ENCODE measurements at regions of chr1 and their contacts with region 1.

Region 1: GRCh38 chr1:70205434-70206118 is at the start of gene LRRC40:
- DNase-seq: peak; percentile 92 to 94
- ATAC-seq: peak; percentile 97
- H3K4me3 ChIP-seq: peak within 1 kb of the TSS; percentile 71 to 92 (median 82)
- H3K27ac ChIP-seq: peak within 1 kb of the TSS; percentile 88 to 95 (median 92)
- H3K4me1 ChIP-seq: peaks cover 53 to 57% of the 10 kb centered on the region in 2 donors
- H3K27me3 ChIP-seq: no peaks in the 10 kb centered on the region
- CTCF ChIP-seq: no peak
- POLR2A ChIP-seq: peak; percentile 66 to 73
- total RNA-seq, gene LRRC40: 6.5 to 10.5 (median 9.3) TPM

Region 2: GRCh38 chr1:70314706-70315304 is 109.2 kb after region 1 on chr1:
- in situ Hi-C with region 1: no loop called
- intact Hi-C with region 1: no loop called
- DNase-seq: no peak
- ATAC-seq: no peak
- H3K4me3 ChIP-seq: no peak overlapping the region
- H3K27ac ChIP-seq: no peak overlapping the region
- H3K4me1 ChIP-seq: no peaks in the 10 kb centered on the region
- H3K27me3 ChIP-seq: no peaks in the 10 kb centered on the region
- CTCF ChIP-seq: no peak
- POLR2A ChIP-seq: no peak

Region 3: GRCh38 chr1:70410604-70411359 is 205.2 kb after region 1 on chr1 and contains the start of gene CTH:
- in situ Hi-C with region 1: loop called in 1 of 4 experiments (anchors 10 kb)
- intact Hi-C with region 1: loop called (anchors 2 kb)
- DNase-seq: peak; percentile 97
- ATAC-seq: peak; percentile 92 to 95
- H3K4me3 ChIP-seq: peak within 1 kb of the TSS; percentile 67 to 85 (median 82)
- H3K27ac ChIP-seq: peak within 1 kb of the TSS; percentile 87 to 98 (median 97)
- H3K4me1 ChIP-seq: peaks cover 14 to 19% of the 10 kb centered on the region in 2 donors
- H3K27me3 ChIP-seq: no peaks in the 10 kb centered on the region
- CTCF ChIP-seq: peak in 1 of 5 experiments; percentile 18
- POLR2A ChIP-seq: peak; percentile 95 to 97
- total RNA-seq, gene CTH: 1.3 to 6.9 (median 2.5) TPM

Region 4: DNA sequence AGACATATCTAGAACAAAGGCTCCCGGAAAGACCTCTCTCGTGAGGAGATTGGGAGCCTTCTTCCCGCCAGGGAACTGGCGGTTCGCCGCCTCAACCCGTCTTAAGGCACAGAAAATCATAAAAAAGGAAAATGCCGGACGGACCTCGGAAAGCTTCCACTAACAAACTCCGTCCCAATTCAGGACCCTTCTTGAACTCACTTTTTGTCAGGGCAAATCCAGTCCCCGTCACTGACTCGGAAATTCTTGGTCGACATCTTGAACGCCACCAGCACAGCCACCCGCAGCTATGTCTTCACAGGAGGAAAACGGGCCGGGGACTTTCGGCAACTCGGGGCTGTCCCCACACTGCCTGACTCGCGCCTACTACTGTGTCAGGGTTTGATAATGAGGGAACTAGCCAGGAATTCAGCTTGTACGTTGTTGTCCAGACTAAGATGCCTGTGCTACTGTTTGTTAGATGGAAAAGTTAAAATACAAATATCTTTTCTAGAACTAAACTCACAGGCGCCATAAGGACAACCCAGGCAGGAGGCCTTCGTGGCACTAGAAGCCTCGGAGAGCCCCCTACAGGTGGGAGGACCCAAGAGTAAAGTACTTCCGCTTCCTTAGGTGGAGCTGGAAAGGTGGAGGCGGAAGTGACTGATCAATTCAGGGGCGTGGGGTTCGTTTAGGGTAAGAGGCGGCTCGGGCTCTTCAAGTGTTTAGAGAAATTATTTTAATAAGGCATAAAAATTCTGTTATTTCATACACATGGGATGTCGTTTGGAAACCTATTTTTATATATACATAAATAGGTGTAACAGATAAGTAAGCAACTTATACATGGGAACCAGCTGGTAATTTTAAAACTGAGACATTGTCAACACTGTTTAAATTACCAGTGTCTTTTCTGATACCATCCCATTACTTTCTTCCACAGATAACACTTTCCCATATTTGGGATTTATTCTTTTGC is 875.4 kb after region 1 on chr1 and contains the start of gene ZRANB2:
- in situ Hi-C with region 1: no loop called
- intact Hi-C with region 1: loop called (anchors 1 kb)
- DNase-seq: peak; percentile 80 to 90
- ATAC-seq: peak; percentile 98 to 99
- H3K4me3 ChIP-seq: peak within 1 kb of the TSS; percentile 74 to 98 (median 84)
- H3K27ac ChIP-seq: peak within 1 kb of the TSS; percentile 86 to 91 (median 89)
- H3K4me1 ChIP-seq: peaks cover 18 to 20% of the 10 kb centered on the region in 2 donors
- H3K27me3 ChIP-seq: no peaks in the 10 kb centered on the region
- CTCF ChIP-seq: peak; percentile 58 to 70 (median 63)
- POLR2A ChIP-seq: peak; percentile 67 to 68
- total RNA-seq, gene ZRANB2: 20.5 to 66.5 (median 24.1) TPM

Measured in gastrocnemius medialis (tissue), 4 donors.